Activated naive CD4-positive, alpha-beta T cell treated with anti-CD3 and anti-CD28 coated beads, Interleukin-2, amount 10 ng/mL, durations not matched to agents 7 days and 5 days (primary cell): ENCODE measurements at regions of chr21 and their contacts with region 1.

Region 1: GRCh38 chr21:31098576-31099005 is 60.3 kb upstream of the KRTAP19-8 start:
- DNase-seq: peak; percentile 82
- H3K4me3 Mint-ChIP-seq: no peak overlapping the region
- H3K27ac Mint-ChIP-seq: no peak overlapping the region
- H3K4me1 Mint-ChIP-seq: peaks cover 26% of the 10 kb centered on the region
- H3K27me3 Mint-ChIP-seq: peaks cover 5% of the 10 kb centered on the region

Region 2: GRCh38 chr21:31142600-31142999 is 44.0 kb after region 1 on chr21:
- CTCF ChIA-PET with region 1: interaction called, 13 read pairs
- DNase-seq: peak; percentile 63
- H3K4me3 Mint-ChIP-seq: no peak overlapping the region
- H3K27ac Mint-ChIP-seq: no peak overlapping the region
- H3K4me1 Mint-ChIP-seq: peaks cover 32% of the 10 kb centered on the region
- H3K27me3 Mint-ChIP-seq: no peaks in the 10 kb centered on the region

Region 3: DNA sequence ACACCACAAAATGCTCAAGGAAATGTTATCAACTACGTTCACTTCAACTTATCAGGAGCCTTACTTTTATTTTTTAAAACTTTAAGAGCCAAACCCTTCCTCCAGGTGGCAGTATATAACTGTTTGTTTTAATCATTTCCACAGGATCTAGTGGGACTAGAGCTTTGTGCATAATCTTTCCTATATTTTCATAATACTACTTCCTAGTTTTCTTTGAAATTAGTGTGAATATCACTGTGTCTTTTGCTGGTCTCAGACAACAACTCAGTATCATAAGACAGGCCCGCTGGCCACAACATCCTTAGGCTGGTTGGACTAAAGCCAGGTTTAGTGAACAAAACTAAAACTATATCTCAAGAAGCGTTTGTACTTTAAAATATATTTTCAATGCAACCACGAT is 100.0 kb after region 1 on chr21:
- CTCF ChIA-PET with region 1: interaction called, 12 read pairs
- DNase-seq: no peak
- H3K4me3 Mint-ChIP-seq: no peak overlapping the region
- H3K27ac Mint-ChIP-seq: no peak overlapping the region
- H3K4me1 Mint-ChIP-seq: peaks cover 40% of the 10 kb centered on the region
- H3K27me3 Mint-ChIP-seq: no peaks in the 10 kb centered on the region